CD8-positive, alpha-beta T cell (primary cell): ENCODE measurements at regions of chr7 and their contacts with region 1.

Region 1: GRCh38 chr7:100407285-100408180 is 21.0 kb downstream of the ZCWPW1 start:
- DNase-seq: peak in 6 of 9 experiments; percentile 9 to 84 (median 38)
- ATAC-seq: peak; percentile 99
- H3K4me3 ChIP-seq: no peak overlapping the region
- H3K4me3 Mint-ChIP-seq: no peak overlapping the region
- H3K27ac ChIP-seq: no peak overlapping the region
- H3K27ac Mint-ChIP-seq: no peak overlapping the region
- H3K4me1 ChIP-seq: no peaks in the 10 kb centered on the region
- H3K4me1 Mint-ChIP-seq: peaks cover 6% of the 10 kb centered on the region
- H3K27me3 ChIP-seq: no peaks in the 10 kb centered on the region
- H3K27me3 Mint-ChIP-seq: no peaks in the 10 kb centered on the region
- CTCF ChIP-seq: peak; percentile 77

Region 2: DNA sequence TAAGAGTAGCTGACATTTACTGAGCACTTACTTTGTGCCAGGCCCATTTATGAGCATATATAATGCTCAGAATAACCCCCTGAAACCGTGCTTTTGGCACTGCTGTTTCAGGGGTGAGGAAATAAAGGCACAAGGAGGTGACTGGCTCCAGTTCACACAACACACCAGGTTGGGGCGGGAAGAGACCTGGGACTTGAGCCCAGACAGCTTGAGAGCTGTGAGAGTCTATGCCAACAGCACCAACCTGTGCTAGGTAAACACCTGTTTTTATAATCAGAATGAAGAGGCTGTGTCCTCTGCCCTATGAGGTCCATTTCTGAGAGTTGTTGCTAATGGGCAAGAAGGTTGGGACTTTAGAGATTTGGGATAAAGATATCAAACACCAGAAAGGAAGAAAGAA is 422.9 kb before region 1 on chr7:
- CTCF ChIA-PET with region 1: no interaction called
- POLR2A ChIA-PET with region 1: no interaction called
- intact Hi-C with region 1: loop called in 1 of 2 experiments (anchors 10 kb)
- DNase-seq: no peak
- ATAC-seq: no peak
- H3K4me3 ChIP-seq: no peak overlapping the region
- H3K4me3 Mint-ChIP-seq: no peak overlapping the region
- H3K27ac ChIP-seq: no peak overlapping the region
- H3K27ac Mint-ChIP-seq: no peak overlapping the region
- H3K4me1 ChIP-seq: no peaks in the 10 kb centered on the region
- H3K4me1 Mint-ChIP-seq: peaks cover 6% of the 10 kb centered on the region
- H3K27me3 ChIP-seq: no peaks in the 10 kb centered on the region
- H3K27me3 Mint-ChIP-seq: peaks cover 3% of the 10 kb centered on the region
- CTCF ChIP-seq: no peak

Region 3: DNA sequence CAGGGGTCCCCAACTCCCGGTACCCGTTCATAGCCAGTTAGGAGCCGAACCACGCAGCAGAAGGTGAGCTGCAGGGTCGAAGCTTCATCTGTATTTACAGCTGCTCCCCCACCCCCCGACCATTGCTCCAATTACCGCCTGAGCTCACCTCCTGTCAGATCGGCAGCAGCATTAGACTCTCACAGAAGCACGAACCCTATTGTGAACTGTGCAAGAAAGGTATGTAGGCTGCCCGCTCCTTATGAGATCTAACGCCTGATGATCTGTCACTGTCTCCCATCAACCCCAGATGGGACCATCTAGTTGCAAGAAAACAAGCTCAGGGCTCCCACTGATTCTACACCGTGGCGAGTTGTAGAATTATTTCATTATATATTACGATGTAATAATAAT is 417.1 kb before region 1 on chr7:
- CTCF ChIA-PET with region 1: no interaction called
- POLR2A ChIA-PET with region 1: no interaction called
- intact Hi-C with region 1: loop called (anchors 5 to 10 kb)
- DNase-seq: no peak
- ATAC-seq: no peak
- H3K4me3 ChIP-seq: no peak overlapping the region
- H3K4me3 Mint-ChIP-seq: no peak overlapping the region
- H3K27ac ChIP-seq: no peak overlapping the region
- H3K27ac Mint-ChIP-seq: no peak overlapping the region
- H3K4me1 ChIP-seq: no peaks in the 10 kb centered on the region
- H3K4me1 Mint-ChIP-seq: peaks cover 3% of the 10 kb centered on the region
- H3K27me3 ChIP-seq: no peaks in the 10 kb centered on the region
- H3K27me3 Mint-ChIP-seq: peaks cover 4% of the 10 kb centered on the region
- CTCF ChIP-seq: no peak

Region 4: DNA sequence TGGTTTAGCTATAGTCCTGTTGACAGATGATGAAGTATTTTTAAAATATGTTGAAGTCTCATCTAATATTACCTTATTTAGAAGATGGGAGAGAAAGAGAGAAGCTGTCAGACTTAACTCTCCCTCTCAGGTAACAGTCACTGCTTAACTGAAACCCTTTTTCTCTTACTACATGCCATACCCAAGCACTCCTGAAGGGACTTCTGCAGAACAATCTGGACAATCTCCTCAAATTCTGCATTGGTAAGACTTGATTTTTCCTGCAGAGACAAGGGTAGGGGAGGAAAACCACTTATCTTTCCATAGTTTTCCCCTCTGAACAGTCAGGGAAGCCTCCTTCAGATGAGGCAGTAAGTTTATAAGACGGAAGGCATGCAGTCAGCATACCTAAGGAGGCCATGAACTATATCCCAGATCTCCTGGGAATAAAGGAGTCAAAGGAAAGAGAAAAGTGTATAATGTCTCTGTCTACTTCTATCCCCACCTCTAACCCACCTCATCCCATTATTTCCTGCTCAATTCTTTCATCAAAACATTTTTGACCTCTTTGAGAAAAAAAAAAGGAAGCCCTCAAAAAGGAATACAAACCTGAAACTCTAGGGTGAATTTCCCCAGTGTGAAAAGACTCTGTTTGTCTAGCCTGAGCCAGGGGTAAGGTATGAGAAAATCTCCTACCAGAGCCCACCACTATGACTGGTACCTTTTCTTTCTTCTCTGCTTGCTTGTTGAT is 11.6 kb after region 1 on chr7:
- CTCF ChIA-PET with region 1: interaction called, 13 read pairs
- POLR2A ChIA-PET with region 1: no interaction called
- intact Hi-C with region 1: no loop called
- DNase-seq: no peak
- ATAC-seq: no peak
- H3K4me3 ChIP-seq: no peak overlapping the region
- H3K4me3 Mint-ChIP-seq: no peak overlapping the region
- H3K27ac ChIP-seq: no peak overlapping the region
- H3K27ac Mint-ChIP-seq: no peak overlapping the region
- H3K4me1 ChIP-seq: no peaks in the 10 kb centered on the region
- H3K4me1 Mint-ChIP-seq: no peaks in the 10 kb centered on the region
- H3K27me3 ChIP-seq: no peaks in the 10 kb centered on the region
- H3K27me3 Mint-ChIP-seq: no peaks in the 10 kb centered on the region
- CTCF ChIP-seq: no peak

Region 5: GRCh38 chr7:100444311-100445278 is 37.1 kb after region 1 on chr7:
- CTCF ChIA-PET with region 1: interaction called, 10 read pairs
- POLR2A ChIA-PET with region 1: no interaction called
- intact Hi-C with region 1: no loop called
- DNase-seq: peak in 1 of 9 experiments; percentile 15
- ATAC-seq: no peak
- H3K4me3 ChIP-seq: no peak overlapping the region
- H3K4me3 Mint-ChIP-seq: no peak overlapping the region
- H3K27ac ChIP-seq: no peak overlapping the region
- H3K27ac Mint-ChIP-seq: no peak overlapping the region
- H3K4me1 ChIP-seq: peaks cover 10% of the 10 kb centered on the region
- H3K4me1 Mint-ChIP-seq: peaks cover 10% of the 10 kb centered on the region
- H3K27me3 ChIP-seq: no peaks in the 10 kb centered on the region
- H3K27me3 Mint-ChIP-seq: no peaks in the 10 kb centered on the region
- CTCF ChIP-seq: no peak